Psoas muscle (tissue), 8 donors: ENCODE measurements at regions of chr6 and their contacts with region 1.

Region 1: DNA sequence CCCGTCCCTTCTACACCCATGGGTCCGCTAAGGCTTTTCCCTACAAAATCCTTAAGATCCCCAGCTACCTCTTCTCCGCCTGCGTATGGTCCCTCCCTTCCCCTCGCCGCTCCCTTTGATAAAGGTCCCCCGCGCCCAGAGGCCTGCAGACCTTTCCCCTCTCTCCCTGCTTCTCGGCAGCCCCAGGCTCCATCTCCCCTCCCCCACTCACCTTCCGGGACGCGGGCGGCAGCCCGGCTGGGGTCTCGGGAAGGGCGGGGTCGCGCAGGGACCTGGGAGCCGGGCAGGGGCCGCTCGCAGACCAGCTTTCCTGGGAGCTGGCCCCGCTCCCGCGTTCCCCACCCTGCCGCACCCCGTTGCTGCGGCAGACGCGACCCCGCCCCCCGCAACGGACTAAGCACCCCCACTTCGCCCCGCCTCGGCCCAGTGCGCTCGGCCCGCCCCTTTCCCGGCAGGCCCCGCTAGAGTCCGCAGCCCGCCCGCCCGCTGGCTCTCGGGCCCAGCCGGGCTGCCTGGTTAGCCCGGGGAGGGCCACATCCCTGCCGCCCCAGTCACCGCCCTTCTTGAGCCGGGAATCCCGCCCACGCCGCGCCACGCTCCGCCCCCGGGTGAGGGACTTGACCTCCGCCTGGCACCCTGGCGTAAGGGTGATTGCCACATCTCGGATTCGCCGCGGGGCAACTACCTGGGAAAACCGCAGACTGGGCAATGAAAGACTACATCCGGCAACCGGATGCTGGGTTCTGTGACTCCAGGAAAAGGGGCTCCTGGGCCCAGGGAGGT is at the start of gene FLOT1:
- DNase-seq: peak; percentile 99
- ATAC-seq: peak; percentile 90 to 92 (median 90)
- H3K4me3 ChIP-seq: peak within 1 kb of the TSS; percentile 92
- H3K27ac ChIP-seq: peak within 1 kb of the TSS; percentile 93
- H3K4me1 ChIP-seq: peaks cover 19% of the 10 kb centered on the region
- H3K27me3 ChIP-seq: no peaks in the 10 kb centered on the region
- CTCF ChIP-seq: no peak
- total RNA-seq, gene FLOT1: 113 to 182 (median 153) TPM

Region 2: DNA sequence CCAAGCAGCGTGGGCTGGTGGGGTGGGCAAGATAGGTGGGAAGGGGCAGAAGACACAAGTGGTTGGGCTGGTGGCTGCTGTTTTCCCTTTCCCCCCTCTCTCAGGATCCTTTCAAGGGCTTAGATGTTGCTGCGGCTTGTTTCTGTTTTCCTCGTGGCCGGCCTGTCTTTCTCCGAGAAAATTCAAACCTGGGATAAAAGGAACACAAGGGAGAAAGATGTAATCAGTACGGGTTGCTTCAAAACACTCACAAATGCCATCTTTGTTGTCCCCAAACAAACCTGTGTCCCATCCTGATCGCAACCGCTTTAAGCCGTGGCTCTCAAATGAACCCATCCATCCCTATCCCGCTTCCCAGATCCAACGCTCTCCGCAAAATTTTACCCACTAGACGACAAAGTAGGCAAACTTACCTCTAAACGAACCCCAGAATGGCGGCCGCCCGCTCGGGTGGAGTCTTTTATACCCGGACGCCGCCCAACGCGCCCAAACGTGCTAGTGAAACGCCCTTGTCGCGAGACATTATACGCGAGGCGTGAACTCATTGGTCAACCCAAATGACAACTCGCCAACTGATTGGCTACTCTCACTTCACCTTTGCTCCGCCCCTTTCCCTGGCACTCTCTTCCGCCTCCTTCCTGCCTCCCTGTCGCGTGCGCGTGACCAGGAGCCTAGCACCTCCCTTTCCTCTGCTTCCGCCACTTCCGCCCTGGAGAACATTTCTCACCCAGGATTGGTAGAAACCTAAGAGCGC is 125.5 kb before region 1 on chr6 and contains the start of gene PPP1R10:
- intact Hi-C with region 1: loop called in 1 of 2 experiments (anchors 5 kb)
- DNase-seq: peak; percentile 98 to 99
- ATAC-seq: peak; percentile 83 to 88 (median 86)
- H3K4me3 ChIP-seq: peak within 1 kb of the TSS; percentile 84
- H3K27ac ChIP-seq: peak within 1 kb of the TSS; percentile 99
- H3K4me1 ChIP-seq: peaks cover 35% of the 10 kb centered on the region
- H3K27me3 ChIP-seq: no peaks in the 10 kb centered on the region
- CTCF ChIP-seq: no peak
- total RNA-seq, gene PPP1R10: 27.1 to 42.5 (median 31.6) TPM

Region 3: GRCh38 chr6:30781743-30782424 is 39.4 kb after region 1 on chr6:
- intact Hi-C with region 1: loop called in 1 of 2 experiments (anchors 5 kb)
- DNase-seq: peak; percentile 95 to 97
- ATAC-seq: peak; percentile 86 to 92 (median 90)
- H3K4me3 ChIP-seq: peak overlapping the region; percentile 38
- H3K27ac ChIP-seq: peak overlapping the region; percentile 84
- H3K4me1 ChIP-seq: peaks cover 30% of the 10 kb centered on the region
- H3K27me3 ChIP-seq: no peaks in the 10 kb centered on the region
- CTCF ChIP-seq: no peak

Region 4: GRCh38 chr6:30877419-30878371 is 135.2 kb after region 1 on chr6:
- intact Hi-C with region 1: loop called in 1 of 2 experiments (anchors 5 kb)
- DNase-seq: peak; percentile 89 to 93
- ATAC-seq: peak; percentile 85 to 91 (median 87)
- H3K4me3 ChIP-seq: peak overlapping the region; percentile 53
- H3K27ac ChIP-seq: peak overlapping the region; percentile 89
- H3K4me1 ChIP-seq: peaks cover 35% of the 10 kb centered on the region
- H3K27me3 ChIP-seq: no peaks in the 10 kb centered on the region
- CTCF ChIP-seq: peak; percentile 81

Region 5: GRCh38 chr6:31087494-31088089 is 345.1 kb after region 1 on chr6:
- intact Hi-C with region 1: loop called in 1 of 2 experiments (anchors 10 kb)
- DNase-seq: peak; percentile 81 to 85
- ATAC-seq: peak; percentile 89 to 97 (median 94)
- H3K4me3 ChIP-seq: no peak overlapping the region
- H3K27ac ChIP-seq: peak overlapping the region; percentile 31
- H3K4me1 ChIP-seq: peaks cover 17% of the 10 kb centered on the region
- H3K27me3 ChIP-seq: no peaks in the 10 kb centered on the region
- CTCF ChIP-seq: peak; percentile 86